ENCODE measurements at regions of chr6 and their contacts with region 1.

Region 1: GRCh38 chr6:44301782-44302564 is 11.2 kb downstream of the AARS2 start:
- DNase-seq: no peak
- H3K27ac ChIP-seq: peak overlapping the region; percentile 15
- CTCF ChIP-seq: no peak

Region 2: GRCh38 chr6:44285552-44286284 is 16.3 kb before region 1 on chr6:
- CTCF ChIA-PET with region 1: interaction called, 4 read pairs
- POLR2A ChIA-PET with region 1: interaction called, 10 read pairs
- DNase-seq: no peak
- H3K27ac ChIP-seq: no peak overlapping the region
- CTCF ChIP-seq: no peak

Region 3: DNA sequence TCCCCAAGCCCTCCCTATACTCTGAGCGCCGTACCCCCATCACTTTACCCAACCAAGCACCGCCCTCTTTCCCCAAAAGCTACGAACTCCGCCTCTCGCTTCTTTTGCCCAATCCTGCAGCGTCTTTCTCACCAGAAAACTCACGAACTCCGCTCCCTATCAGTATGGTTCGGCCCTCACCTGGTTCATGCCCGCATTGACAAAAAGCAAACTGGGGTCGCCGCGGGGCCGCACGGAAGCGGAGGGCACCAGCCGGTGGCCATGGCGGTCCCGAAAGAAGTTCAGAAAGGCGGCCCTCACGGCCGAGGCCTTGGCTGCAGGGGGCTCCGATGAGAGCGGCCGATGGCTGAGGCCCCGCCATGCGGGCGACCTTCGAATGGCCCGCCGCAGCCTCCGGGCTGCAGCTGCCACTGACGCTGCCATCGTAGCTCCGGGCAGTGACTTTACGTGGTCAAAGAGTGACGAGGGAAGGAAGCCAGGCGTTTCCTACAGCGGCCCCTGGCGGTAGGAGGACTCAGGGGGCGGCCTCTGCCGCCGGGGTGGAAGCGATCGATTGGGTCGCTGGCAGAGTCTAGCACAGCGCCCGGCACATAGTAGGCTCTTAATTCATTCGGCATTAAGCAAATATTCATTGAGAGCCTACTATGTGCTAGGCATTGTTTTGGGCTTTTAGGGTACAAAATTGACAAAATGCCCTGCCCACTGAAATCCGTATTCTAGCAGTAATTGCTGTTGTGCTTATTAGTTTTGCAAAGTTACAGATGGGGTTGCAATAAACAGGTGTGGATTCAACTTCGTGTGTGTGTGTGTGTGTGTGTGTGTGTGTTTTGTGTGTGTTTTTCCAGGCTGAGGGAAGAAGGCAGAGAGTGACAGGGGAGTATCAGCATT is 11.2 kb after region 1 on chr6 and contains the start of gene AARS2:
- CTCF ChIA-PET with region 1: interaction called, 10 read pairs
- POLR2A ChIA-PET with region 1: interaction called, 3 read pairs
- DNase-seq: peak; percentile 79
- H3K27ac ChIP-seq: peak within 1 kb of the TSS; percentile 75
- CTCF ChIP-seq: peak; percentile 94

Measured in RWPE1 (cell line).